Left lung (tissue), 14 donors: ENCODE measurements at regions of chr22 and their contacts with region 1.

Region 1: DNA sequence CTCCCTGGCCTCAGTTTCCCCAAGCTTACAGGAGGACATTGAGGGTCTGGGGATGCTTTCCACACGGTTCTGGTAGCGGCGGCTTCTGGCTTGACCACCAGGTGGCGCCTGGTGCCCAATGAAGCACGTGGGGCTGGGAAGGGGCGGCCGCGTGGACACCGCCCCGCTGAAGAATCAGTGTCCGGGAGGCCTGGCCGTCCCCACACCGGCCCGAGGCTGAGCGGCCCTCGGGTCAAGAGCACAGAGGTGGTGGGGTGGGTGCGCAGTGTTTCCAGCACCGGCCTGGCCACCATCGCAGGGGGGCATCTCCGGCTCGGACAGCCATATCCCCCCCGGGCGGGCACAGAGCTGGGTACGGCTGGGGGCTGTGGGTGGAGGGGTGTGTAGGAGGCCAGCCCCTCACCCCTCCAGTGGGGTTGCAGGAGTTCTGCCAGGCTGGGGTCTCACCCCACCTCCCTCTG is 27.8 kb upstream of the PPARA start:
- DNase-seq: peak; percentile 53 to 93 (median 73)
- ATAC-seq: peak; percentile 71
- H3K4me3 ChIP-seq: no peak overlapping the region
- H3K27ac ChIP-seq: no peak overlapping the region
- H3K4me1 ChIP-seq: peaks cover 5 to 8% of the 10 kb centered on the region in 2 donors
- H3K27me3 ChIP-seq: no peaks in the 10 kb centered on the region
- CTCF ChIP-seq: peak; percentile 93 to 96

Region 2: GRCh38 chr22:45952151-45952550 is 170.4 kb before region 1 on chr22:
- intact Hi-C with region 1: no loop called
- DNase-seq: no peak
- ATAC-seq: no peak
- H3K4me3 ChIP-seq: no peak overlapping the region
- H3K27ac ChIP-seq: no peak overlapping the region
- H3K4me1 ChIP-seq: no peaks in the 10 kb centered on the region
- H3K27me3 ChIP-seq: peaks cover 0 to 41% of the 10 kb centered on the region in 2 donors
- CTCF ChIP-seq: no peak

Region 3: DNA sequence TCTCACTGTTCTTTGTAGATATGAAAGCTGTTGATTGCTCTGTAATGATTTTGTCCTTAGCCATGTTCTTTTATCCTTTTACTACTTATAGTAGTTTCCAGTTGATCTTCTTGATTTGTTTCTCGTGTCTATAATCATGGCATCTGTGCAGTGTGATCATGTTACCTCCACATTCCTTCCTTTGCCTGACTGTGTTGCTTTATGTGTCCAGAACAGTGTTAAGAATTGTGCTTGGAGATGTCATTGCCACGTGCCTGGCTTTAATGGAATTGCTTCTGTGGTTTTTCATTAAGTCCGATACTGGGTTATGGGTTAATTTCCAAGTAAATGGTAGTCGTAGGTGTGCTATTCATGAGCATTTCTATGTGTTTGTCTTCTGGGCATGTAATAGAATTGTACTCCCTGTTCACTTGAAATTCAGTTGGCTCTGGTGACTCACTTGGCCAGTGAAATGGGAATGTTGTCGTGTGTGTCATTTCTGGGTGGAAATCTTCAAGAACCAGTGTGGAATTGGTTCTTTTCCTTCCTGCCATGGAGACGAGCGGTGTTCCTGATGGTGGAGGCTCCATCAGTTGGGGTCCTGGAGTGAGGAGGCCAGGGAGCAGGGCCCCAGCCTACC is 180.9 kb after region 1 on chr22:
- intact Hi-C with region 1: loop called in 1 of 2 experiments (anchors 10 kb)
- DNase-seq: no peak
- ATAC-seq: no peak
- H3K4me3 ChIP-seq: no peak overlapping the region
- H3K27ac ChIP-seq: no peak overlapping the region
- H3K4me1 ChIP-seq: no peaks in the 10 kb centered on the region
- H3K27me3 ChIP-seq: no peaks in the 10 kb centered on the region
- CTCF ChIP-seq: no peak

Region 4: DNA sequence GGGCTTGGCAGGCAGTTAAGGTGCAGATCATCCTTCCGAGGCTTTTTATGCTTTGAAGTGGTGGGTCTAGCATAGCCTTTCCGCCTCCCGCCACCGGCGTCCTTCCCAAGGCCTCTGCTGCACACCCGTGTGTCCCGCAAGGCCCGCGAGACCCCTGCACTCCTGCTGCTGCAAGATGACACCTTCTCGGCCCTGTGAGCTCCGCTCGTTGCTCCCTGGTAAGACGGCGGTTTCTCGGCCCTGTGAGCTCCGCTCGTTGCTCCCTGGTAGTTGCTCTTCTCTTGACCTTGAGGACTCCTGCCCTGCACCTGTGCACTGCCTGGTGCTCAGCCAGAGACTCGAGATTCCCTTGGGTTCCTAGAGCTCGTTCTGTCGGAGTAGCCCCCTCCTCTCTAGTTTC is 195.1 kb after region 1 on chr22:
- intact Hi-C with region 1: loop called in 1 of 2 experiments (anchors 5 kb)
- DNase-seq: no peak
- ATAC-seq: no peak
- H3K4me3 ChIP-seq: no peak overlapping the region
- H3K27ac ChIP-seq: no peak overlapping the region
- H3K4me1 ChIP-seq: no peaks in the 10 kb centered on the region
- H3K27me3 ChIP-seq: no peaks in the 10 kb centered on the region
- CTCF ChIP-seq: no peak